ENCODE measurements at regions of chr6 and their contacts with region 1.

Region 1: GRCh38 chr6:73461537-73462350 is at the start of gene MTO1:
- DNase-seq: peak; percentile 94
- ATAC-seq: peak; percentile 91
- H3K4me3 Mint-ChIP-seq: peak within 1 kb of the TSS; percentile 88
- H3K27ac Mint-ChIP-seq: peak within 1 kb of the TSS; percentile 100
- H3K4me1 Mint-ChIP-seq: peaks cover 61% of the 10 kb centered on the region
- H3K27me3 Mint-ChIP-seq: no peaks in the 10 kb centered on the region
- total RNA-seq, gene MTO1: 65.8 to 66.6 TPM

Region 2: GRCh38 chr6:73451223-73452107 is 10.3 kb before region 1 on chr6:
- CTCF ChIA-PET with region 1: interaction called, 45 read pairs
- DNase-seq: peak; percentile 68
- ATAC-seq: peak; percentile 58
- H3K4me3 Mint-ChIP-seq: peak overlapping the region; percentile 100
- H3K27ac Mint-ChIP-seq: peak overlapping the region; percentile 95
- H3K4me1 Mint-ChIP-seq: peaks cover 43% of the 10 kb centered on the region
- H3K27me3 Mint-ChIP-seq: no peaks in the 10 kb centered on the region

Region 3: DNA sequence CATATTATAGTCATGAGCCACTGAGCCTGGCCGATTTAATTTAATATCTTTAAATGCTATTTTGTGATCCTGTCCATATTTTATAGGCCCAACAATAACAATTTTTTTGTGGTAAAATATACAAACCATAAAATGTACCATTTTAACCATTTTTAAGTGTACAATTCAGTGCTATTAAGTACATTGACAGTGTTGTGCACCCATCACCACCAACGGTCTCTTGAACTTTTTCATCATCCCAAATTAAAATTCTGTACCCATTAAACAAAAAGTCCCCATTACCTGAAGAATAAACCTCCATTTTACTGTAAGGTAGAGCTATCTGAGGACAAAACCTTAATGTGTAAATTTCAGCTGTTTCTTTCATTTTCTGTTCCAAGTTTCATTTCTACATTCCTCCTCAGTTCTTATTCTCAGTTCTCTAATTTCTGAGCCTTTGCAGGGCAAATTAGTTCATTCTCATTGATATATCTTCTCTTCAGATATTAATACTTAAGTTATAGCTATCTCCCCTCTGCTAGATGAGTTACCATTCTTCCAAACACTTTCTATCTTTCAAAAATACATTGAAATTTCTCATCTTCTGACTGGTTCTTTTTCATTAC is 10.0 kb after region 1 on chr6:
- CTCF ChIA-PET with region 1: interaction called, 19 read pairs
- DNase-seq: no peak
- ATAC-seq: peak; percentile 52
- H3K4me3 Mint-ChIP-seq: peak overlapping the region; percentile 72
- H3K27ac Mint-ChIP-seq: peak overlapping the region; percentile 97
- H3K4me1 Mint-ChIP-seq: peaks cover 24% of the 10 kb centered on the region
- H3K27me3 Mint-ChIP-seq: no peaks in the 10 kb centered on the region

Region 4: GRCh38 chr6:73515204-73515655 is 53.5 kb after region 1 on chr6:
- CTCF ChIA-PET with region 1: interaction called, 10 read pairs
- DNase-seq: peak; percentile 43
- ATAC-seq: peak; percentile 10
- H3K4me3 Mint-ChIP-seq: no peak overlapping the region
- H3K27ac Mint-ChIP-seq: peak overlapping the region; percentile 81
- H3K4me1 Mint-ChIP-seq: peaks cover 55% of the 10 kb centered on the region
- H3K27me3 Mint-ChIP-seq: no peaks in the 10 kb centered on the region